ENCODE measurements at regions of chr10 and their contacts with region 1.

Region 1: GRCh38 chr10:1048732-1049424 is at the start of gene IDI1:
- DNase-seq: peak; percentile 97
- ATAC-seq: peak; percentile 85
- H3K4me3 Mint-ChIP-seq: peak within 1 kb of the TSS; percentile 98
- H3K27ac Mint-ChIP-seq: peak within 1 kb of the TSS; percentile 96
- H3K4me1 Mint-ChIP-seq: peaks cover 64% of the 10 kb centered on the region
- H3K27me3 Mint-ChIP-seq: no peaks in the 10 kb centered on the region
- total RNA-seq, gene IDI1: 40.4 to 66.0 TPM

Region 2: DNA sequence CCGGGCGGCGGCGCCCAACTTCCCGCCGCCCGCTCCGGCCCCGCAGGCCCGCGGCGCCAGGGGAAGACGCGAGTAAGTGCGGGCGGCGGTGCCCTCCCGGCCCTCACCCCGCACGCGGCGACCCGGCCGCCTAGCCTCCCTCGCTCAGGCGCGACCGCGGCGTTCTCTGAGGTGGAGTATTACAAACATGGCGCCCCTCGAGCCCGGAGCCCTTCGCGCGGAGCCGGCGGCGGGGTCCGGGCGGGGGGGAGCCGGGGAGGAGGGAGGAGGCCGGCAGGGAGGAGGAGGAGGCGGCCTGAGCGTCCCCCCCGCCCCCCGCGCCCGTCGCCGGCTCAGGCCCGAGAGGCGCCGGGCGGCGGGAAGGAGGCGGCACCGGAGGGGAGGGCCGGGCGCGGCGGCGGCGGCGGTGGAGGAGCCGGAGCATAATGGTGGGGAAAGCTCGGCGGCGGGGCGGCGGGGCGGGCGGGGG is 913.7 kb before region 1 on chr10 and contains the start of gene ZMYND11:
- CTCF ChIA-PET with region 1: no interaction called
- POLR2A ChIA-PET with region 1: no interaction called
- intact Hi-C with region 1: loop called in 1 of 2 experiments (anchors 2 kb)
- DNase-seq: peak; percentile 74
- ATAC-seq: peak; percentile 25
- H3K4me3 Mint-ChIP-seq: peak within 1 kb of the TSS; percentile 84
- H3K27ac Mint-ChIP-seq: peak within 1 kb of the TSS; percentile 90
- H3K4me1 Mint-ChIP-seq: peaks cover 43% of the 10 kb centered on the region
- H3K27me3 Mint-ChIP-seq: no peaks in the 10 kb centered on the region
- total RNA-seq, gene ZMYND11: 13.2 to 16.9 TPM

Region 3: DNA sequence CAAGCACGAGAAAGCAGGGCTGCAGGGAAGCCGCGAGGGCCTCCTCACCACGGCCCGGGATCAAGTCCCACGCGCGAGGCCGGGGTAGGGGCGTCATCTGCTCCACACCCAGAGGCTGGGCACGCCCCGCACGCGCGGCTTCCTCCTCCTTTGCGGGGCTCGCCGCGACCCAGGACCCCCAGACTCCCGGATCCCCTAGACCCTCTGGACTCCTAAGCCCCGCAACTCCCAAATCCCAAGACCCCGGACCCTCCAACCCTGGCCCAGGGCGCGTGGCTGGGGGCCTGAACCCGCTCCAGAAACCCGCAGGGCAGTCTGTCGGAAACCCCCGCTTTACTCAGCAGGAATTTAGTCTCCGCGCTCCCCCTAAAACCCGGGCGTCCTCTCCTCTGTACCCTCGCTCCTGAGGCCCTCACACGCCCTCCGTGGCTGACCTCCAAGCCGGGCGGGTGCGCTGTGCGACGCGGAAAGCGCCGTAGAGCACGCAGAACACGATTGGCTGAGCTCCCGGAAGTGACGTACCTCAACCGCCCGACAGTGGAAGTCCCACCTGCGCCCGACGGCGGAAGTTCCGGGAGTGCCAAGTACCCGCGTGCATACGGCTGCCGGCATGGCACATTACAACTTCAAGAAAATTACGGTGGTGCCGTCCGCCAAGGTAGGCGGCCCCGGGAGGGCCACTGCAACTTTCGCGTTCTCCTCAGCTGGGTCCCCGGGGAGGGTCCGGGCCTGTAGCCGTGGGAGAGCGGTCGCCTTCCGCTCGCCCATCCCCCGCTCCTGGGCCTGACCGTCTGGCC is 60.8 kb before region 1 on chr10 and contains the start of gene GTPBP4:
- CTCF ChIA-PET with region 1: no interaction called
- POLR2A ChIA-PET with region 1: interaction called, 8 read pairs
- intact Hi-C with region 1: loop called (anchors 1 kb)
- DNase-seq: peak; percentile 98
- ATAC-seq: peak; percentile 98
- H3K4me3 Mint-ChIP-seq: peak within 1 kb of the TSS; percentile 93
- H3K27ac Mint-ChIP-seq: peak within 1 kb of the TSS; percentile 96
- H3K4me1 Mint-ChIP-seq: peaks cover 40% of the 10 kb centered on the region
- H3K27me3 Mint-ChIP-seq: no peaks in the 10 kb centered on the region
- total RNA-seq, gene GTPBP4: 109 to 116 TPM

Region 4: GRCh38 chr10:1061930-1062774 is 13.3 kb after region 1 on chr10:
- CTCF ChIA-PET with region 1: interaction called, 14 read pairs
- POLR2A ChIA-PET with region 1: interaction called, 9 read pairs
- intact Hi-C with region 1: loop called in 1 of 2 experiments (anchors 1 kb)
- DNase-seq: no peak
- ATAC-seq: no peak
- H3K4me3 Mint-ChIP-seq: peak overlapping the region; percentile 21
- H3K27ac Mint-ChIP-seq: peak overlapping the region; percentile 76
- H3K4me1 Mint-ChIP-seq: peaks cover 80% of the 10 kb centered on the region
- H3K27me3 Mint-ChIP-seq: no peaks in the 10 kb centered on the region

Region 5: DNA sequence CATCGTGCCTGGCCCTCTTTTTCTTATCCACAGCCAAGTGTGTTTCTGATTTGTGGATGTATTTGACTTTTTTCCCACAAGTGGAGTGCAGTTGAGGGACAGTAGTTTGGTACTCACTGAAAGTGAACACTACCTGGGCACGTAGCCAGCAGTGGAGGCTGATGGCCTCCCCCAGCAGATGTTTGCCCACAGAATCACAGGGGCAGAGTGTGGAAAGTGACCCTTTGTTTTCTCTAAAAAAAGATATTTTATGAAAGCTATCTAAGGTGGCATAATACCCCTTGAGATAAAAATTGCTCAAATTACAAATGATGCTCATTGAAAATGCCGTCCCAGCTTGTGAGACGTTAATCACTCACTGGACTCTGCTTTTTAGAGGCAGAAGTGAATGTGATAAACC is 36.4 kb after region 1 on chr10:
- CTCF ChIA-PET with region 1: no interaction called
- POLR2A ChIA-PET with region 1: no interaction called
- intact Hi-C with region 1: no loop called
- DNase-seq: no peak
- ATAC-seq: no peak
- H3K4me3 Mint-ChIP-seq: no peak overlapping the region
- H3K27ac Mint-ChIP-seq: no peak overlapping the region
- H3K4me1 Mint-ChIP-seq: peaks cover 7% of the 10 kb centered on the region
- H3K27me3 Mint-ChIP-seq: no peaks in the 10 kb centered on the region

Measured in activated CD4-positive, alpha-beta T cell treated with anti-CD3 and anti-CD28 coated beads for 36 hours (primary cell).